ENCODE measurements at regions of chr7 and their contacts with region 1.

Region 1: DNA sequence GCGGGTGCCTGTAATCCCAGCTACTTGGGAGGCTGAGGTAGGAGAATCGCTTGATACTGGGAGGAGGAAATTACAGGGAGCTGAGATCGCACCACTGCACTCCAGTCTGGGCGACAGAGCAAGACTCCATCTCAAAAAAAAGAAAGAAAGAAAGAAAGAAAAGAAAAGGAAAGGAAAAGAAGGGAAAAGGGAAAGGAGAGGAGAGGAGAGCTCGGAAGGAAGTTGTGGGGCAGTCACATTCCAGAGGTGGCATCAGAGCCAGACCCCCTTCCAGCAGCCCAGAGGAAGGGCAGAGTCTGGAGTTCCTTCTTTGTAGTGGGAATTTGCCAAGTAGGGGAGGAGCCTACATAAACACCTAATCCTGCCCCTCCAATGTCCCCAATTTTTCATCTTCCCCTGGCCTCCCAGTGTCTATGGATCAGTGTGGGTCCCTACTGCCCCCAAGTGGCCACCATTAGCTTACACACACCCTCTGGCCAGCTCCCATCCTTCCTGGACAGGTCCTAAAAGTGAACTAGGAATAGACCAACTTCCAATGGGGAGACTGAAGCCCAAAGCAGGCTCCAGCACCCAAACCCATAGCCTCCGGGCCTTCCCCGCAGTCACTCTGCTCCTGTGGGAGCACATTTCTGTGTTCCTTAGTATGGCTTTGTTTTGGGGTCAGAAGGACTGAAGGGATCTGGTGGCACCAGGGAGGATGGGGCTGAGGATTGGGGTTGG is 39.6 kb upstream of the HSPB1 start:
- DNase-seq: peak; percentile 61
- CTCF ChIP-seq: peak; percentile 80

Region 2: DNA sequence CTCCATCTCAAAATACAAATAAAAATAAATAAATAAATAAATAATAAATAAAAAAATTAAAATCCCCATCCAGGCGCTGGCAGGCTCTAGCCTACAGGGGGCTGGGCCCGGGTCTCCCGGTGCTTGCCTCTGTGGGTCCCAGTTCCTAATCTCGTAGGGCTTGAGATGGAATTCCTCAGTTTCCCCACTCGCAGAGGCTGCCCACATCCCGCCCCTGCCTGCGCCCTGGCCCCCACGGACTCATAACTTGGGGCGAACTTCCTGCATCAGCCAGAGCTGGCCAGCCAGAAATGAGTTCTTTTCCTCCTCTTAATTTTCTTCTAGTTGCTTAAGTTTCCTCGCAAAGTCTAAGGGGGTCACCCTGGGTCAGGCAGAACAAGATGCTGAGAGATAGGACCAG is 83.2 kb before region 1 on chr7:
- CTCF ChIA-PET with region 1: interaction called, 59 read pairs
- POLR2A ChIA-PET with region 1: no interaction called
- DNase-seq: no peak
- CTCF ChIP-seq: no peak

Region 3: GRCh38 chr7:76241141-76241540 is 21.7 kb before region 1 on chr7:
- CTCF ChIA-PET with region 1: interaction called, 24 read pairs
- POLR2A ChIA-PET with region 1: no interaction called
- DNase-seq: no peak
- CTCF ChIP-seq: no peak

Region 4: GRCh38 chr7:76272851-76273497 is 10.1 kb after region 1 on chr7:
- CTCF ChIA-PET with region 1: interaction called, 42 read pairs
- POLR2A ChIA-PET with region 1: no interaction called
- DNase-seq: peak; percentile 67
- CTCF ChIP-seq: no peak

Region 5: DNA sequence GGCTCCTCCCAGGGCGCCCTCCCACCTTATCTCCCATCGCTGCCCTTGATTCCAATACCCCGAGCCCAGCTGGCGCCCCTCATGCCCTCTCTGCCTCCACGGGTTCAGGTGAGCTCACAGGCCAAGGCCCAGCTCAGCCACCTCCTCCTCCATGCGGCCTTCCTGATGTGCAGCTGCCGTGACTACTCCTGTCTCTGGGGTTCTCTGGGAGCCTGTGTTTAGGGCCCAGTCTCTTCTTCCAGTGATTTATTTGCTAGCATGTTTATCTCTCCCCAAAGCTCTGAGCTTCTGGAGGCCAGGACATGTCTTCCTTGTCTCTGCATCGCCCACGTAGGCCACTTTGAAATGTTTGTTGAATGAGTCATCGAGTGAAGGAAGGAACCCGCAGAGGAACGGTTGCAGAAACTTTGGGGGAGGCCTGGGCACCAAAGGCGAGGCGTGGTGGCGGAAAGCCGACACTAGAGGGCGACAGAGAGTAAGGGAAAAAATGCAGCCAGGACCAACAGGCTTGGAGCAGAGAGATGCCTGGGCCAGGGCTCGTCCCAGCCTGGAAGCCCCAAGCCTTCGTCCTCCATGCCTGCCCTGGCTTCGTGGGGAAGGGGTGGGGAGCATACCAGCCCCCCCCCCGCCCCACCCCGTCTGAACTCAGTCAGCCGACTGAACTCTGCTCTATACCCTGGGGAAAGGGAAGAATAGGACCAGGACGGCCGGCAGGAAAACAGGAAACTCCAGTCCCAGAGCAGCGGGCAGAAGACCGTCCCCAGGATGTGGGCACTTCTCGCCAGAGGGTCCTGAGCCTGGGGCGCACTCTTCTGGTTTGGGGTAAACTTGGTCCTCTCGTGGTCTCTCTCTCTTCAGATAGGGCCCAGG is 28.7 kb after region 1 on chr7:
- CTCF ChIA-PET with region 1: interaction called, 21 read pairs
- POLR2A ChIA-PET with region 1: no interaction called
- DNase-seq: peak; percentile 92
- CTCF ChIP-seq: peak; percentile 98

Region 6: DNA sequence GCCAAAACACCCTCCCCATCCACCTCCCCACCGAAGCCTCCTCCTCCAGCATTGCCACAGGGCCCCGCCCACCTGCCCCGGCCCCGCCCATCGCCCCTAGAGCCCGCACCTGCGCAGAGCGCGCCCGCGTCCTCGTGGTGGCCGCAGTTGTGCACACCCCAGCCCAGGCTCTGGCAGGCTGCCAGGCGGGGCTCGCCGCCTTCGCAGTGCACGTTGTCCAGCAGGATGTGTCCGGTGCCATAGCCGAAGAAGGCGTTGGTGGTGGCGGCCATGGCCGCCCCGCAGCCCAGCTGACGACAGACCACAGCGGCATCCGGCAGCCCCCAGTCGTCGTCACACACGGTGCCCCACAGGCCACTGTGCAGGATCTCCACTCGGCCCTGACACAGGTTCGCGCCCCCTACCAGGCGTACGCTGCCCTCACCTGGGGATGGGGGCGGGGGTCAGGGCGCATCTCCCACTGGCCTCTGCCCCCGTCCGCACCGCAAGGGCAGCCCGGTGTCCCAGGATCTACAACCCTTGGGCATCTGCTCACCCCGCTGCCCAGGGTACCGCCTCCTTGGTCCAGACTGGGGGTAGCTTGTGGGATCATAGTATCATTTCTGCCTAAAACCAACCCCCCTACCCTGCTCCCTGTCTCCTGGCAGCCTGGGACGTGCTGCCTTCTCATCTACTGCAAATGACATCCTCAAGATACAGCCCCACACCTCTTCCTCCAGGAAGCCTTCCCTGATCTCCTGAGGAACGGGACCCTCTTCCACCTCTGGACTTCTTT is 134.8 kb after region 1 on chr7:
- CTCF ChIA-PET with region 1: no interaction called
- POLR2A ChIA-PET with region 1: no interaction called
- DNase-seq: peak; percentile 89
- CTCF ChIP-seq: no peak